Activated T-helper 1 cell treated with anti-CD3 and anti-CD28 coated beads, Interleukin-12 subunit alpha, Interleukin-12 subunit beta, Interleukin-2, Interleukin-4 antibody, amounts not matched to agents 30 ng/mL and 10 ng/mL and 1 ng/mL, durations not matched to agents 14 hours and 24 hours and 36 hours (primary cell): ENCODE measurements at regions of chr3 and their contacts with region 1.

Region 1: DNA sequence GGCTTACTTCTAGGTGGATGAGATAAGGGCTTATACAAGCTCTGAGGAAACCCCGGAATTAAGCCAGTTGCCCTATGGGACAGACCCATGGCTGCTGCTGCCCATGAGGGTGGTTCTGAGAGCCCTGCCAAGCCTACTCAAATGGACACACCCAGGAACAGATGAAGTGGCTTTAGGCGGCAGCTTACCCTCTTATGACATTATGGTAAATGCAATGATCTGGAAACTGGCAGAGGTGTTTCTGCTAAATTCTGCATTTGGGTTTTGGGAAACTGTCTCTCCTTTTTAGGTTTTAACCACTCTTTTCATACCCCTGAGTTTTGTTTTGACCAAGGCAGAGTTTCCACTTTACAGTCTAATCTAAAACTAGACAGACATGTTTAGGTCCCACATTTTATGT is 9.0 kb upstream of the ZBED2 start:
- DNase-seq: no peak
- H3K4me3 Mint-ChIP-seq: peak overlapping the region; percentile 53
- H3K27ac Mint-ChIP-seq: peak overlapping the region; percentile 99
- H3K4me1 Mint-ChIP-seq: peaks cover 84% of the 10 kb centered on the region
- H3K27me3 Mint-ChIP-seq: no peaks in the 10 kb centered on the region

Region 2: DNA sequence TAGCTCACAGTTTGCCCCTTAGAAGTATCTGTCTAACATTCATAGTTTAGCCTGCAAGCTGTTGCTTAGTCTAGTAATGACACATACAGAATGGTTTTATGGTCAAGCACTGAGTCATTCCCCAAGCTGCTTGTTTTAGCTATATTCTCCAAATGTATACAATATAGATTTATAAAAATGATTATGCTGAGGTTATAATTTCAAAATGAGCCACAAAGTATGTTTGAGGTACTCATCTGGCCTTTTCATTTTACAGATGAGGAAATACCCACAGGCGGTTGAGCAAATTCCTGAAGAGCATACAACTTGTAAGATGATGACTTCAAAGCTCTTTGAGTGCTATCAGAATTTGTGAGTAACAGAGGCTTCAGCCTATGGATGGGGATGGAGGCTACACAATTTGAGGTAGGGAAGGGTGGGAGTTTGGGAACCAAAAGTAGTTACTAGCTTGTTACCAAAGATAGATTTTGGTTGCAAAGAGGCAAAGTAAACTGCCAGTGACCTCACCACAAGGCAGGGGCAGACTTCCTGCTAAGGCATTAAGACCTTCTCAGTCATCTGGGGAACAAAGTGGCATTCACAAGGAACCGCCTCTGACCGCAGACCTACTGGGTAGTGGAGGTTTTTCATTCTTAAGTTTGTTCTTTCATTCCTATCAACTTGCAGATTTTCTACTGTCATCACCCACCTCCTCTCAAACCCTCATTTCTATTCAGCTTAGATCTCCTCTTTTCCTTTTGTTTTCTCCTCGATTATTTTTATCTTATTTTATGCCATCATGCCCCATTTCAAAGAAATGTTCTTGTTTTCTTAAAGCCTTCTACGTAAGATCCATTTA is 789.7 kb before region 1 on chr3:
- intact Hi-C with region 1: loop called (anchors 5 kb)
- DNase-seq: peak; percentile 9
- H3K4me3 Mint-ChIP-seq: peak overlapping the region; percentile 37
- H3K27ac Mint-ChIP-seq: peak overlapping the region; percentile 70
- H3K4me1 Mint-ChIP-seq: peaks cover 22% of the 10 kb centered on the region
- H3K27me3 Mint-ChIP-seq: peaks cover 11% of the 10 kb centered on the region

Region 3: GRCh38 chr3:111238885-111239284 is 365.2 kb before region 1 on chr3:
- intact Hi-C with region 1: loop called (anchors 5 kb)
- DNase-seq: peak; percentile 48
- H3K4me3 Mint-ChIP-seq: peak overlapping the region; percentile 69
- H3K27ac Mint-ChIP-seq: peak overlapping the region; percentile 76
- H3K4me1 Mint-ChIP-seq: peaks cover 49% of the 10 kb centered on the region
- H3K27me3 Mint-ChIP-seq: no peaks in the 10 kb centered on the region

Region 4: DNA sequence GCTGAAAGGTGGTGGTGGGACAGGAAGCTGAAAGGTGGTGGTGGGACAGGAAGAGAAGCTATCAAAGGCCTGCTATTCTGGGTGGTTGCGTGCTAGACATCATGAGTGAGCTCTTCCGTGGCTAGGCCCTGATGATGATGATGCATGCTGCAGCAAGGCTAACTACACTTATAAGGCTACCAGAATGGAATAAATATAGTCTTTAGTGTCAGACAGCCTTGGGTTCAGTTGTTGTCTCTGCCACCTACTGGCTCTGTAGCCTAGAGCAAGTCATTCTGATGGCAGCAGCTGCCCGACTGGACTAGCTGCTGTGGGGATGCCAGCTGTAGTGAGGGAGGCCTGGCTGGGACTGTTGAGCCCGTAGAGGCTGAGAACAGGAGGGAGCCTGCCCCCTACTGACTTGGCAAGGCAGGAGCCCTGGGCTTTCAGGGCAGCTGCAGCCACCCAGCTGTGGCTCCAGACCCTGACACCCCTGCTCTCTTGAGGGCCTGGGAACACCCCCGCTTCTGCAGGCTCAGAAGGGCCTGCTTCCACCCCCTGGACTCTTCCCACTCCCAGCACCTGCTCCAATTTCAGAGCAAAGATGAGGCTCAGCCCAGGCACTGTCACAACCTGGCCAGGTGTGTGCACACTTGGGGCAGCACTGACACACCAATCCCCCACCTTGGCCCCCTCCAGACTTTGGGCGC is 12.4 kb after region 1 on chr3:
- intact Hi-C with region 1: loop called (anchors 1 kb)
- DNase-seq: peak; percentile 61
- H3K4me3 Mint-ChIP-seq: peak overlapping the region; percentile 70
- H3K27ac Mint-ChIP-seq: peak overlapping the region; percentile 98
- H3K4me1 Mint-ChIP-seq: peaks cover 84% of the 10 kb centered on the region
- H3K27me3 Mint-ChIP-seq: no peaks in the 10 kb centered on the region

Region 5: DNA sequence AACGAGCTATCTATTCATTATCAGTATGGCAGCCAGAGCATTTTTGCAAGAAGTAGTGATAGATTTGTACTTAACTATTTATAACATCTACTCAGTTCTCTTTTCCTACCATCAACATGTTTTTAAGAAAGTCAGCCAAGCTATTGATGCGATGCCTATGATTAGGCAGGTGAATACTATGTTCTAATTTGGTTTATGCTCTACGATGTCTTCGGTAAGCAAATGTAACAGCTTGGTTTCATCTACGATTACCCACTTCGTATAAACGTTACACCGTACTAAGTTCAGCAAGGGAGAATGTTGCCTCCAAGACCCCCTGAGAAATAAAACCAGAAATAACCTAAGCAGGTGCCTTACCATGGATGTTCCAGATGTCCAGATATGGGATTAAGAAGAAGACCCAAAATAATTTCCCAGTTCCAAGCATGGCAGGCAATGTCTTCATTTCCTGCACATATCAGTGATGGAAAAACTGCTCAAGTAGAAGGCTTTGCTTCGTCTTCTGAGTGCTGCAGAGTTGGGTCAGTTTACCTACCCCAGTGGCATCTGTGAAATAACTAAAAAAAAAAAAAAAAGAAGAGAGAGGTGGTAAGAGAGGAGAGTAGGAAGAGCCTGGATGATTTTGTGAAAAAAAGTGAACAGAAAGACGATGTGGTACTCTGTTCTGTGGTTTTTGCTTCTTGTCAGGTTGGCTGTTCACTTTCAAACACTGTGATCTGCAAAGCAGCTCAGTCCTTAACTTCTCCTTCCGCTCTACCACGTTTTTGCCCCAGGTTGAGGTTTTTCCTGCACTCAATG is 895.0 kb after region 1 on chr3 and contains the start of gene BTLA:
- intact Hi-C with region 1: loop called (anchors 10 kb)
- DNase-seq: peak; percentile 35
- H3K4me3 Mint-ChIP-seq: peak within 1 kb of the TSS; percentile 95
- H3K27ac Mint-ChIP-seq: peak within 1 kb of the TSS; percentile 97
- H3K4me1 Mint-ChIP-seq: peaks cover 67% of the 10 kb centered on the region
- H3K27me3 Mint-ChIP-seq: no peaks in the 10 kb centered on the region
- total RNA-seq, gene BTLA: 39.4 and 40.7 TPM in 2 replicates

Region 6: GRCh38 chr3:112979240-112979832 is 1375.2 kb after region 1 on chr3:
- intact Hi-C with region 1: loop called (anchors 10 kb)
- DNase-seq: no peak
- H3K4me3 Mint-ChIP-seq: no peak overlapping the region
- H3K27ac Mint-ChIP-seq: no peak overlapping the region
- H3K4me1 Mint-ChIP-seq: peaks cover 67% of the 10 kb centered on the region
- H3K27me3 Mint-ChIP-seq: no peaks in the 10 kb centered on the region